HCT116 (cell line): ENCODE measurements at regions of chr9 and their contacts with region 1.

Region 1: GRCh38 chr9:19641046-19641445 is 147.8 kb downstream of the SLC24A2 start:
- DNase-seq: no peak
- ATAC-seq: peak; percentile 38; the same call in 1 of the 2 replicates
- H3K4me3 ChIP-seq: no peak overlapping the region
- H3K27ac ChIP-seq: no peak overlapping the region
- H3K4me1 ChIP-seq: no peaks in the 10 kb centered on the region
- H3K27me3 ChIP-seq: peaks cover 34% of the 10 kb centered on the region
- CTCF ChIP-seq: peak in 2 of 3 experiments; percentile 8 to 22; a peak in 2 of 6 replicates
- POLR2A ChIP-seq: no peak
- RAD21 ChIP-seq: peak; percentile 16; the same call in 1 of the 2 replicates

Region 2: DNA sequence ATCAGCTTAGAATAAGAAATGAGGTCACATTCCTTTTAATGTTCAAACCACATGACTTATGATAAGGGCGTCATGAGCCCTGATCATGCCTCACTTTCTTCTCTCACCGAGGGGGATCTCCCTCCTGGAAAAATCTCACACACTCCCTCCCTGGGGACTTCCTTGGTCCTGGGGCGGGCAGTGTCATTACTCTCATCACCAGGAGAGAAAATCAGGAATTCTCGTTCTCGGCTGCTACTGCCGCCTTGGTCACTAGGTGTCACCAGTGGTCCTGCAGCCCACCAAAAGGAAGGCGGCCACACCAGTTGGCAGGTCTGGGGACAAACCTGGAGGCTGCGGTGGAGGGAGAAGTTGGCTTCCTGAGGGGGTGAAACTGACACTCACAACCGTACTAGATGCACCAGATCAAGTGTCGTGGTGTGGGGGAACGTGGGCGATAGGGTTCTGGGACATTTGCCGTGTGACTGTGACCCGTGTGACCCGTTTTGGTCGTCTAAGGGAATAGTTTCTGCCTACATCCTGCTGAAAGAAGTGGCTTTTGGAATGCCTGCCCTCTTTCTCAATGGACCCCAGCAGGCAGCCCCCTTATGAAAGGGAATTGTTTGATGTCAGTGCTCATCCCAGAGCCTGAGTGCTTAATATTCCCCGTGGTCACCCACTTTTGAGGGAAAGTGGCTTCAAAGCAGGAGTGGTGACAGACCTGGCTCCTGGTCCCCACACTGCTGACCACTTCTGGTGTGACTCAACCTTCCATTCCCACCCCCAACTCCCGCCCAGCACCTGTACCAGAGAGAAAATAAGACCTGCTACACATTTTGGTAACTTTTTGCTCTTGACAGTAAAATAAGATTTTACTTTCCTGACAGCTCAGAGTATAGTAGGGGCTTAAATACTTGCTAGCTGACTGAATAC is 169.1 kb before region 1 on chr9:
- CTCF ChIA-PET with region 1: no interaction called
- POLR2A ChIA-PET with region 1: no interaction called
- RAD21 ChIA-PET with region 1: no interaction called
- intact Hi-C with region 1: loop called (anchors 5 kb)
- DNase-seq: peak; percentile 48
- ATAC-seq: peak; percentile 97
- H3K4me3 ChIP-seq: peak overlapping the region; percentile 20 to 31
- H3K27ac ChIP-seq: no peak overlapping the region
- H3K4me1 ChIP-seq: peaks cover 4 to 8% of the 10 kb centered on the region in 2 experiments; a peak in 3 of 4 replicates
- H3K27me3 ChIP-seq: no peaks in the 10 kb centered on the region
- CTCF ChIP-seq: peak; percentile 55 to 92 (median 83); a peak in 5 of 6 replicates
- POLR2A ChIP-seq: no peak
- RAD21 ChIP-seq: peak; percentile 84

Region 3: GRCh38 chr9:19493174-19493811 is 147.8 kb before region 1 on chr9:
- CTCF ChIA-PET with region 1: no interaction called
- POLR2A ChIA-PET with region 1: no interaction called
- RAD21 ChIA-PET with region 1: no interaction called
- intact Hi-C with region 1: loop called (anchors 5 kb)
- DNase-seq: peak; percentile 33
- ATAC-seq: peak; percentile 86
- H3K4me3 ChIP-seq: no peak overlapping the region
- H3K27ac ChIP-seq: no peak overlapping the region
- H3K4me1 ChIP-seq: peaks cover 0 to 5% of the 10 kb centered on the region in 2 experiments; a peak in 1 of 4 replicates
- H3K27me3 ChIP-seq: peaks cover 23% of the 10 kb centered on the region; the same call in 1 of the 2 replicates
- CTCF ChIP-seq: peak; percentile 44 to 87 (median 71); a peak in 5 of 6 replicates
- POLR2A ChIP-seq: no peak
- RAD21 ChIP-seq: peak; percentile 70

Region 4: GRCh38 chr9:19782005-19782404 is 141.0 kb after region 1 on chr9:
- CTCF ChIA-PET with region 1: no interaction called
- POLR2A ChIA-PET with region 1: no interaction called
- RAD21 ChIA-PET with region 1: no interaction called
- intact Hi-C with region 1: no loop called
- DNase-seq: no peak
- ATAC-seq: no peak
- H3K4me3 ChIP-seq: no peak overlapping the region
- H3K27ac ChIP-seq: no peak overlapping the region
- H3K4me1 ChIP-seq: no peaks in the 10 kb centered on the region
- H3K27me3 ChIP-seq: no peaks in the 10 kb centered on the region
- CTCF ChIP-seq: no peak
- POLR2A ChIP-seq: no peak
- RAD21 ChIP-seq: no peak